ENCODE measurements at regions of chr17 and their contacts with region 1.

Region 1: DNA sequence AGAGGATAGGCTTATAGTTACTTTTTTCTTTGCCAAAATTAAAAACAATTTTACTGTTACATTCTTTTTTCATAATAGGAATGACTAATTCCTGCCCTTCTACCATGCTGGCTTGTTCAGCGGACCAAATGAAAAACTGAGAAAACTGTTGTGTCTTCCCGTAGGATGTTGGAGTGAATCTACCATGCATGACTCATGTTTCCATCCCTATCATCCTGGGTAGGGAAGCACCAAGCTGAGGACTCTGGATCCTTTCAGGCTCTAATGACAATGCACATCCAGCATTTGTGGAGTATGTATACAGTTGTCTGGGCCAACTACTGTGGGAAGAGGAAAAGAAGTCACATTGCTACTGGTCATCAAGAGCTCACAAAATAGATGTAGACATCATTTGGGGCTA is 41.1 kb upstream of the DHX8 start:
- DNase-seq: no peak
- ATAC-seq: no peak
- H3K4me3 ChIP-seq: no peak overlapping the region
- H3K27ac ChIP-seq: no peak overlapping the region
- H3K4me1 ChIP-seq: peaks cover 46% of the 10 kb centered on the region
- H3K27me3 ChIP-seq: no peaks in the 10 kb centered on the region
- CTCF ChIP-seq: no peak
- EP300 ChIP-seq: no peak
- POLR2A ChIP-seq: no peak
- RAD21 ChIP-seq: no peak

Region 2: GRCh38 chr17:43431714-43432523 is 10.8 kb before region 1 on chr17:
- CTCF ChIA-PET with region 1: no interaction called
- POLR2A ChIA-PET with region 1: no interaction called
- in situ Hi-C with region 1: no loop called
- intact Hi-C with region 1: loop called (anchors 1 kb)
- DNase-seq: no peak
- ATAC-seq: no peak
- H3K4me3 ChIP-seq: no peak overlapping the region
- H3K27ac ChIP-seq: no peak overlapping the region
- H3K4me1 ChIP-seq: peaks cover 87% of the 10 kb centered on the region
- H3K27me3 ChIP-seq: no peaks in the 10 kb centered on the region
- CTCF ChIP-seq: no peak
- EP300 ChIP-seq: no peak
- POLR2A ChIP-seq: no peak
- RAD21 ChIP-seq: no peak

Measured in HepG2 (cell line).